Psoas muscle (tissue), 8 donors: ENCODE measurements at regions of chr13 and their contacts with region 1.

Region 1: GRCh38 chr13:53863520-53863919 is 834.9 kb downstream of the OLFM4 start:
- DNase-seq: no peak
- ATAC-seq: no peak
- H3K4me3 ChIP-seq: no peak overlapping the region
- H3K27ac ChIP-seq: no peak overlapping the region
- H3K4me1 ChIP-seq: no peaks in the 10 kb centered on the region
- H3K27me3 ChIP-seq: no peaks in the 10 kb centered on the region
- CTCF ChIP-seq: no peak

Region 2: DNA sequence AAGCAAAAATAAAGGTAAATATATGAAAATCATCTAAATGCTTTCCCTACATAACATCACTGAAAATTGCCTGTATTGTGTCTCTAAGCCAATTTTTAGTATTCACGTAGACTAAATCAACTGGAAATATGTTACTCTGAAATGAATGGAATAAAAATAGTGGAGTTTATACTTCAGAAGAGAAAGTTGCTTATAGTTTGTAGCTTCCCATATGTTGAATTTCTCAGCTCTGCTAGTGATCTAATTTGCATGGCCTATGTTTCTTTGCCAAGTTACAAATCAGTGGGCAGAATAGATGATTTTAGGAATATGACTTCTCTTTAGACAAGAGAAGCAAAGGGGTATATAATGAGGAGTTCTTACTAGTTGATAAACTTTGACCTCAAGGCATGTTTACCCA is 15.3 kb after region 1 on chr13:
- intact Hi-C with region 1: loop called in 1 of 2 experiments (anchors 2 kb)
- DNase-seq: no peak
- ATAC-seq: no peak
- H3K4me3 ChIP-seq: no peak overlapping the region
- H3K27ac ChIP-seq: no peak overlapping the region
- H3K4me1 ChIP-seq: no peaks in the 10 kb centered on the region
- H3K27me3 ChIP-seq: no peaks in the 10 kb centered on the region
- CTCF ChIP-seq: no peak

Region 3: DNA sequence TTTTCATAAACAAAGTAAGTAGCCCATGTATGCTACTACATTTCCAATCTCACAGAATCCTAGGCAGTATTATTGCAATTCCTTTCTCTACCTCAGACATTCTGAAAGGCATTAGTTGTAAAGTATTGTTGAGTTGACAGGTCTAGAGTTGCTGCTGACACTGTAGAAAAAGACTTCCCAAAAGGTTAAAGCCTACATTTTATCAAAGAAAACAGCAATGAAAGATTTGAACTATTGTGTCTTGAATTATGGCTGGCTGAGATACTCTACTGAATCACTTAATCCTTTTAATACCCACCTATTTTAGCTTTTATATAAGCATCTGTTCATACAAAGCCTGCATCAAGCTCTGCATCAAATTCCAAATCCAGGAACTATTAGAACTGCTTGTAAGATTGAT is 247.1 kb after region 1 on chr13:
- intact Hi-C with region 1: no loop called
- DNase-seq: no peak
- ATAC-seq: no peak
- H3K4me3 ChIP-seq: no peak overlapping the region
- H3K27ac ChIP-seq: no peak overlapping the region
- H3K4me1 ChIP-seq: no peaks in the 10 kb centered on the region
- H3K27me3 ChIP-seq: no peaks in the 10 kb centered on the region
- CTCF ChIP-seq: no peak